Activated CD8-positive, alpha-beta T cell treated with anti-CD3 and anti-CD28 coated beads for 36 hours (primary cell): ENCODE measurements at regions of chr9 and their contacts with region 1.

Region 1: DNA sequence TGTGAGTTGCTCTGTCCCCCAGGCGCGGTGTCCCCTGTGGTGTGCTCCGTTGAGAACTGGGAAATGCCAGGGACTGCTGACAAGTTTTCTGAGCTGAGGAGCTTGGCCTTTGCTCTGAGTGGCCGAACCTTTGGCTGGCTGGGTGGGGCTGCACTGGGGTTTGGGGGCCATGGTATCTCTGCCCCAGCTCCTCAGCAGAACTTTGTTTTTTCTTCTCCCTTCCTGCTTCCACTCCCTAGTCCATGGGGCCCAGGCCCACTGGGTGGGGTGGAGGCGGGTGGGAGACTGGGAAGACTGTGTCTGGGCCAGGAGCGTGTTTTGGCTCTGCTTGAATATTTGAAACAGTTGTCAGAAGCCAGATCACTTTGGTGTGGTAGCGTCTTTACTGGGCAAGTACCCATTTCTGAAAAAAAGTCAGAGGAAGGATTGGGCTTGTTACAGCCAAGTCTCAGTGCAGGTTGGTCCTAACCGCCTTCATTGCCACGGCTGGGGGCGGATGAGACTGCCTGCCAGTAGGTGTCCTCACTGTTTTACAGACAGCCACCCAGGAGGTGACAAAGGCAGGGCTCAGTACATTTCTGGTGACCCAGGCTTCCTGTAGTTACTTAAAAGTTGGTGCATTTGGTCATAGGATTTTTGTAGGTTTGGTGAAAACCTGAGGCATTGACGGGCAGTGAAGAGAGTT is 92.7 kb downstream of the DAB2IP start:
- DNase-seq: peak; percentile 80
- ATAC-seq: peak; percentile 81
- H3K4me3 Mint-ChIP-seq: no peak overlapping the region
- H3K27ac Mint-ChIP-seq: no peak overlapping the region
- H3K4me1 Mint-ChIP-seq: peaks cover 17% of the 10 kb centered on the region
- H3K27me3 Mint-ChIP-seq: no peaks in the 10 kb centered on the region
- CTCF ChIP-seq: peak; percentile 52

Region 2: GRCh38 chr9:121725008-121725775 is 19.0 kb before region 1 on chr9:
- CTCF ChIA-PET with region 1: no interaction called
- POLR2A ChIA-PET with region 1: no interaction called
- intact Hi-C with region 1: no loop called
- DNase-seq: no peak
- ATAC-seq: no peak
- H3K4me3 Mint-ChIP-seq: no peak overlapping the region
- H3K27ac Mint-ChIP-seq: no peak overlapping the region
- H3K4me1 Mint-ChIP-seq: no peaks in the 10 kb centered on the region
- H3K27me3 Mint-ChIP-seq: no peaks in the 10 kb centered on the region
- CTCF ChIP-seq: no peak

Region 3: DNA sequence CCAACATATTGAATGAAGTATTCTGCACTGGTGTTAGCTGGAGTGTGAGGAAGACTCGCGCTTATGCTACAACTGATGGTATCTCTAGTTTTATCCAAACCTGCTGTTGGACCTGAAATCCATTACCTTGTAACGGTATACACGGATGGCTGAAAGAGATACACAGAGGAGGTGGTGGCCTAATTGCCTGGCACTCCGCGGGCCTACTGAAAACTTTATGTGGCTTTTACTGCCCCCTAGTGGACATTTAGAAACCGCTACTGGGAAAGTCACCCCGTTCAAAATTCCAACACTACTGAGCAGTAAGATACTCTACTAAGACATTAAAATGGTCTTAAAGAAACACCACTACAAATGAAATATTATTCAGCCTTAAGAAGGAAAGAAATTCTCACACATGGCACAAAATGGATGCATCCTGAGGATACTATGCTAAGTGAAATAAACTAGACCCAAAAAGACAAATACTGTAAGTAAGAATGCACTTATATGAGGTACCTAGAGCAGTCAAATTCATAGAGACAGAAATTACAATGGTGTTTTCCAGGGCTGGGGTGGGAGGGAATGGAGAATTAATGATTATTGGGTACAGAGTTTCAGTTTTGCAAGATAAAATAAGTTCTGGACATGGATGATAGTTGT is 248.5 kb after region 1 on chr9:
- CTCF ChIA-PET with region 1: interaction called, 4 read pairs
- POLR2A ChIA-PET with region 1: no interaction called
- intact Hi-C with region 1: loop called (anchors 2 kb)
- DNase-seq: peak; percentile 67
- ATAC-seq: peak; percentile 80
- H3K4me3 Mint-ChIP-seq: no peak overlapping the region
- H3K27ac Mint-ChIP-seq: no peak overlapping the region
- H3K4me1 Mint-ChIP-seq: no peaks in the 10 kb centered on the region
- H3K27me3 Mint-ChIP-seq: no peaks in the 10 kb centered on the region
- CTCF ChIP-seq: peak; percentile 88